Sigmoid colon (tissue), 7 donors: ENCODE measurements at regions of chrX and their contacts with region 1.

Region 1: DNA sequence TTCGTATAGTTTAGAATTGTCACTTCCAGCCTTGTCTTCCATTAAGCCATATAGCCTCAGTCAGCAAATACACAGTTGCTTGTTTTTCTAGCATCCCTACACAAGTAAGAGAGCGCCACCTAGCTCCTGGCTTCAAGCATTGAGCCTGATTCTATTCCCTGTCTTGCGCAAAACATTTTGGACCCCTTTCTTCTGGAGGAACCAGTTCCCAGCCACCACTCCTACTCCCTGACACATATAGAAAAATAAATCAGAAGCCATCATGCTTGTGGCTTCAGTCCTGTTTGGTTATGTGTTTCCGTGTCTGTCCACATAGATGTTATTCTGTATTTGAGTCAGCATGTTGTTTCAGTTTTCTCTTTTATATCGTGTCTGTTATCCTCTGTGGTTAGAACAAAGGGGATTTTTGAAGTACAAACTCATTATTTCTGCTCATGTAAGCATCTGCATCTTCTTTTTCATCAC is 59.9 kb downstream of the GK start:
- DNase-seq: no peak
- H3K4me3 ChIP-seq: no peak overlapping the region
- H3K27ac ChIP-seq: no peak overlapping the region
- H3K4me1 ChIP-seq: no peaks in the 10 kb centered on the region
- H3K27me3 ChIP-seq: no peaks in the 10 kb centered on the region
- CTCF ChIP-seq: peak in 3 of 4 experiments; percentile 5 to 44 (median 32)
- EP300 ChIP-seq: no peak
- POLR2A ChIP-seq: no peak

Region 2: DNA sequence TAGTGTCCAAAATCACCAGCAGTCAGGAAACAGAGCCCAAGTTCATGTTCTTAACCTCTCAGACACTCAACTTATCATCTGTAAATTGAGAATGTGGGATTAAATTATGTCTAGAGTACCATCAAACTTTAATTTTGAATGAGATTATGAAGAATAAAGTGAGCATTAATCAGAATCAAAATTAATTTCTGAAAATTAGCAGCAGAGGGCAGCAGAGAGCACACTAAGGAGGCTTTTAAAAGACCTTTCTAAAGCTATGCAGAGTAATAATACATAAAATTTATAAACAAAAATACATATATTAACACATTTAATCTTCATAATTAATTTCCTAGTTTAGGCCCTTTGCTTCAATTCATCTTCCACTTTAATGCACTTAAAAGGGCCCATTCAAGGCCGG is 142.6 kb before region 1 on chrX:
- intact Hi-C with region 1: loop called (anchors 5 kb)
- DNase-seq: no peak
- H3K4me3 ChIP-seq: no peak overlapping the region
- H3K27ac ChIP-seq: no peak overlapping the region
- H3K4me1 ChIP-seq: no peaks in the 10 kb centered on the region
- H3K27me3 ChIP-seq: no peaks in the 10 kb centered on the region
- CTCF ChIP-seq: peak in 2 of 4 experiments; percentile 25 to 45
- EP300 ChIP-seq: no peak
- POLR2A ChIP-seq: no peak

Region 3: DNA sequence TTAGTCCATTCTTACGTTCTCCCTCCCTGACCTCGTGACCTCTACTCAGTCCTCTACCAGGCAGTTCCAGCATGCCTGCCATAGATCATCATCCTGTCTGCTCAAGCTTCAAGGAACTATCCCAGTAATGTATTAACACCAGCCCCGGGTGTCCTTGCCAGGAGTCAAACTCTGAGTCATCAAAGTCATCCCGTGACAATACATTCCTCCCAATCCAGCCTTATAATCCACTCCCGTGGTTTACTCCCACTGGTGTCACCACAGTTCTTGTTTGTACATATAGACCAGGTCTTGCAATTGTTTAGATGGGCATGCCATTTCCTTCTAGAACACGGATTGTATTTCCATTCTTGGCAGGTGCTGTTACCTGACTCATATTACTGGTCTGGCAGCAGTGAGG is 244.7 kb after region 1 on chrX:
- intact Hi-C with region 1: no loop called
- DNase-seq: no peak
- H3K4me3 ChIP-seq: no peak overlapping the region
- H3K27ac ChIP-seq: no peak overlapping the region
- H3K4me1 ChIP-seq: no peaks in the 10 kb centered on the region
- H3K27me3 ChIP-seq: no peaks in the 10 kb centered on the region
- CTCF ChIP-seq: no peak
- EP300 ChIP-seq: no peak
- POLR2A ChIP-seq: no peak